Motor neuron (in vitro differentiated cells): ENCODE measurements at regions of chr4 and their contacts with region 1.

Region 1: GRCh38 chr4:186342582-186342981 is 76.6 kb downstream of the F11 start:
- ATAC-seq: no peak
- H3K4me3 ChIP-seq: no peak overlapping the region
- H3K27ac ChIP-seq: no peak overlapping the region
- H3K4me1 ChIP-seq: peaks cover 0 to 6% of the 10 kb centered on the region in 2 donors

Region 2: DNA sequence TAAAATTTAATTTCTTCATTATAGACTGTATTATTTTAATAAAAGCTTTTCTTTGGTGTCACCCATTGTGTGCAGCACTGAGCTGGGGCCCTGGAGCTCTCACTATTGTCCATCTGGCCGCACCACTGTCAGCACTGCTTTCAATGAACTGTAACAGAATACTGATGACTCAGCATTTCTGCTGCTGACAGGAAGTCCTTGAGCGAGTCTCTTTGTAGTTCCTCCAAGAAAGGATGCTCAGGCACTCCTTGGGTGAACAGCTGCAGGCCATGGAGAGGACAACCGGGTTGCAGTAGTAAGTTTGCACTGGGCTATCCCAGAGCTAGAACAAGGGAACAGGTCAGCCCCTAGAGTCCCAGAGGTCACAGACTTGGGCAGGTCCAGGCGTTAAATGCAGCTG is 612.2 kb before region 1 on chr4:
- in situ Hi-C with region 1: no loop called
- ATAC-seq: peak in 7 of 8 experiments; percentile 69 to 88 (median 82)
- H3K4me3 ChIP-seq: no peak overlapping the region
- H3K27ac ChIP-seq: no peak overlapping the region
- H3K4me1 ChIP-seq: peaks cover 14 to 31% of the 10 kb centered on the region in 2 donors

Region 3: GRCh38 chr4:186161138-186161537 is 181.4 kb before region 1 on chr4:
- in situ Hi-C with region 1: no loop called
- ATAC-seq: no peak
- H3K4me3 ChIP-seq: no peak overlapping the region
- H3K27ac ChIP-seq: no peak overlapping the region
- H3K4me1 ChIP-seq: no peaks in the 10 kb centered on the region

Region 4: DNA sequence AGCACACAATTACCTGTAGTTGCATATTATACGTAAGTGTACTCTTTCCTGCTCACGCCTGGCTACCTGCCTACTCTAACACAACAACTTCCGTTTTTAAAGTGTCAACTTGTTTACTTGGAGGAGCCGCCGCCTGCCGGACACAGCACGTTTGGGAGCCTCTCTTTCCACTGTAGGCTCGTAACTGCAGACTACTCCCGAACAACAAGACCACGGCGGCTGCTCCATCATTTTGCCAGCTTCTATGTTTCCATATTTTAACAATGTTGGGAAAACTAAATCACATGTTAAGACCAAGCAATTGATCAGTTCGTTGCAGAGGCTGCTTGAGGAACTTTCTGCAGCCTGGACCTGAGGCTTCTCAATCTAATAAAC is 211.9 kb after region 1 on chr4:
- in situ Hi-C with region 1: loop called in 1 of 9 experiments (anchors 25 kb)
- ATAC-seq: peak in 5 of 8 experiments; percentile 8 to 59 (median 24)
- H3K4me3 ChIP-seq: peak overlapping the region; percentile 39 to 47 (median 43)
- H3K27ac ChIP-seq: no peak overlapping the region
- H3K4me1 ChIP-seq: no peaks in the 10 kb centered on the region

Region 5: DNA sequence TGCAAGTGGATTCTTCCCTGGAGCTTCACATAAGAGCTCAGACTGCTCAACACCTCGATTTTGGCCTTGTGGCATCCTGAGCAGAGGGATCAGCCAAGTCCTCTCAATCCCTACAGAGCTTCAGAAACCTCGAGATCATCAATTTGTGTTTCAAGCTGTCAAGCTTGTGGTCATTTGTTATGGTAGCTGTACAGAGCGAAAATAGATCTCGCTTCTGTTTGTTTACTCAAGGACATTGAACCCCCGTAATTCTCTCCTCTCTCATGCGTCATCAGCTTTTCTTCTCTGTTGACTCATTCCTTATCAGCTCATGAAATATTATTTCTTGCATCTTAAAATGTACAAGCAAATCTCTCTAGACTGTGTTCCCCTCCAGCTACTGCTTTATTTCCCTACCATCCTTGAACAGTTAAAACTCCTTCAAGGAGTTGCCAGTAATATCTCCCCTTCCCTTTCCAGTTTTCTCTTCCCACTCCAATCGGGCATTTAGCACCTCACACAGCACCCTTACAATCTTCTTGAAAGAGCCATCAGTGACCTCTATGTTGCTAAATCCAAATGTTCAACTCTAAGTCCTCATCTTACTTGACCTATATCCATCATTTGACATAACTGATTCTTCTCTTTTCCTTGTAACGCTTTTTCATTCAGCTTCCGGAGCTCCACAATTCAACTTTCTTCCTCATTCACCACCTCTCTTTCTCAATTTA is 487.3 kb after region 1 on chr4:
- in situ Hi-C with region 1: no loop called
- ATAC-seq: no peak
- H3K4me3 ChIP-seq: no peak overlapping the region
- H3K27ac ChIP-seq: no peak overlapping the region
- H3K4me1 ChIP-seq: no peaks in the 10 kb centered on the region